ENCODE measurements at regions of chr22 and their contacts with region 1.

Region 1: DNA sequence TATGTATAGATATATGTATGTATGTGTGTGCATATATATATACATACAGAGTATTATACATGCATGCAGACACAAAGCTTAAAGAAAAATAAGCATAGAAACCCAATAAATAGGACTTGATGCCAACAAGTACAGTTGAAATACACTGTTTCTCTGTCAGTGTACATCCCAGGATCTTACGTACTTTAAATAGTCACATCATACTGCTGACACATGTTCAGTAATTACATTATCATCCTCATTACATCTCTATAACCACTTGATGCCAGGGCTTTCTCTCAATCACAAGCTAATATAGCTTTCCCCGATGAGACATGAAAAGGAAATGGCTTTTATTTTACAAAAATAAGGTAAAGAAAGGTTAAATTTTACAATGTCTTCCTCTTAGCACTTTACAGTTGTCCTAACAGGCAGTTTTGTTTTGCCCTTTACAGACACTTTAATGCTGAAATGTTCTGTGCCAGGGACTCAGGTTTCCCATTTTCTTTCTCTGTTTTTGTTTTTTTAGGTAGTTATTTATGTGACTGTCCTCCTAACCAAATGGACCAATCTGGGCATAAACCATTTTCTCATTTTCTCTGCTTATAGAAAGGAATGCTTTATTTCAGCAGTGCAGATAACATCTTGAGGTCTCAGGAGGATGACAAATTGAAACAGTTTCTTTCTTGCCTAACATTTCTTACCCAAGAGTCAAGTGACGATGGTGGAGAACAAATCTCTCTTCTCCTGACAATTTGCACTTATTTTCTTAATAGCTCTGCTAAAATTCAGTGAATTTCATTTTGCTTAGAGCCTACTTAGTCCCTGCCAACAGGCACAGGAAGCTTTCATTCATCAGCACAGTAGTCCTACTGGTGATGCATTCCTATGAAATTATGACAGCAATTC is 350.2 kb downstream of the TTC28 start:
- DNase-seq: no peak
- H3K4me3 Mint-ChIP-seq: no peak overlapping the region
- H3K27ac Mint-ChIP-seq: no peak overlapping the region
- H3K4me1 Mint-ChIP-seq: no peaks in the 10 kb centered on the region
- H3K27me3 Mint-ChIP-seq: no peaks in the 10 kb centered on the region

Region 2: GRCh38 chr22:28310299-28310698 is 19.1 kb before region 1 on chr22:
- CTCF ChIA-PET with region 1: no interaction called
- intact Hi-C with region 1: no loop called
- DNase-seq: no peak
- H3K4me3 Mint-ChIP-seq: no peak overlapping the region
- H3K27ac Mint-ChIP-seq: no peak overlapping the region
- H3K4me1 Mint-ChIP-seq: no peaks in the 10 kb centered on the region
- H3K27me3 Mint-ChIP-seq: no peaks in the 10 kb centered on the region

Region 3: GRCh38 chr22:28360939-28361338 is 31.5 kb after region 1 on chr22:
- CTCF ChIA-PET with region 1: no interaction called
- intact Hi-C with region 1: loop called (anchors 5 kb)
- DNase-seq: no peak
- H3K4me3 Mint-ChIP-seq: no peak overlapping the region
- H3K27ac Mint-ChIP-seq: peak overlapping the region; percentile 61
- H3K4me1 Mint-ChIP-seq: peaks cover 6% of the 10 kb centered on the region
- H3K27me3 Mint-ChIP-seq: no peaks in the 10 kb centered on the region